Activated CD8-positive, alpha-beta memory T cell treated with anti-CD3 and anti-CD28 coated beads, Interleukin-2, amount 10 ng/mL, durations not matched to agents 7 days and 5 days (primary cell): ENCODE measurements at regions of chr6 and their contacts with region 1.

Region 1: GRCh38 chr6:27146706-27147505 is 100.6 kb upstream of the PRSS16 start:
- DNase-seq: peak; percentile 92
- ATAC-seq: peak; percentile 68
- H3K4me3 Mint-ChIP-seq: no peak overlapping the region
- H3K27ac Mint-ChIP-seq: no peak overlapping the region
- H3K4me1 Mint-ChIP-seq: peaks cover 25% of the 10 kb centered on the region
- H3K27me3 Mint-ChIP-seq: no peaks in the 10 kb centered on the region

Region 2: GRCh38 chr6:27132532-27133280 is 14.2 kb before region 1 on chr6:
- CTCF ChIA-PET with region 1: interaction called, 42 read pairs
- DNase-seq: peak; percentile 96
- ATAC-seq: peak; percentile 74
- H3K4me3 Mint-ChIP-seq: no peak overlapping the region
- H3K27ac Mint-ChIP-seq: no peak overlapping the region
- H3K4me1 Mint-ChIP-seq: peaks cover 49% of the 10 kb centered on the region
- H3K27me3 Mint-ChIP-seq: no peaks in the 10 kb centered on the region

Region 3: GRCh38 chr6:27388293-27389197 is 241.6 kb after region 1 on chr6 and contains the start of gene ZNF391:
- CTCF ChIA-PET with region 1: no interaction called
- DNase-seq: peak; percentile 77
- ATAC-seq: peak; percentile 94
- H3K4me3 Mint-ChIP-seq: peak within 1 kb of the TSS; percentile 97
- H3K27ac Mint-ChIP-seq: peak within 1 kb of the TSS; percentile 89
- H3K4me1 Mint-ChIP-seq: peaks cover 17% of the 10 kb centered on the region
- H3K27me3 Mint-ChIP-seq: peaks cover 12% of the 10 kb centered on the region
- total RNA-seq, gene ZNF391: 0.73 to 1.3 TPM

Region 4: DNA sequence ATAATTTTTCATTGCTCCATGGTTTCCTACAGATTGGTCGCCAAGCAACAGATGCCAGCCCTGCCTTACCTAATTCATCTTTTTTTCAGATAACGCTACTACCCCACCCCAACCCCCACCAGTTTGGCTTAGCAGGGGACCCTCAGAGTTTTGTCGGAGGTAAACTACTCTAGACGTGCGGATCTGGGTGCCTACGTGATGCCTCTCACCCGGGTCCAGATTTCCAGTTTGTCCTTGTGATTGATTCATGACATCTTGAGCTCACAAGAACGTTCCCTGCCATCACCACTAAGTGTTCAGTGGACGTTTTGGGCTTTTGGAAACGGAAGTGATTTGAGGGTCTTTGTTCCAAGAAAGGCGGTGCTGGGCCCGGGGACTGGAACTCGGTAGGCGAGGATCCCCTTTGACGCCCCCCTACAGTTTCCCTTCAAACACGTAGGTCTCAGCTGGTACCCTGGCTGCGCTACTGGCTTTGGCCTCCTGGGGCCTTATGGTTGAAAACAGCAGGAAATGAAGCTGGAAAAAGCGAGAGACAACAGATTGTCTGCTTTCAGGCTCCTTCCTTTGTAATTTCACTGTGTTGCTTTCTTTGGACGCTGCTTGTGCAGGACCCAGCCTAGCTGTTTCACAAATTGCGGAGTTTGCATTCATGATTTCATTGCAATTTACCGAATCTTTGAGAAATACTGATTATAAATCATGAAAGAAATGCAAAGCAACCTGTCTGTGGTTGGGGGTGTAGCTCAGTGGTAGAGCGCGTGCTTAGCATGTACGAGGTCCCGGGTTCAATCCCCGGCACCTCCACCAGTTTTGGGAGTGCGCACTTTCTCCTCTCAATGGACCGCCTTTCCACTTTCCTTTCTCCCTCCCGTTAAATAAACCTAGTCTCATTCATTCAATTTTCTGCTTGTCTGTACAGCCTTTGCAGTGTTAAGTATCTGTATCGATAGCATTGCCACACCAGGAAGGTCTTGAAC is 1459.8 kb after region 1 on chr6:
- CTCF ChIA-PET with region 1: no interaction called
- DNase-seq: peak; percentile 47
- ATAC-seq: no peak
- H3K4me3 Mint-ChIP-seq: peak overlapping the region; percentile 32
- H3K27ac Mint-ChIP-seq: no peak overlapping the region
- H3K4me1 Mint-ChIP-seq: peaks cover 5% of the 10 kb centered on the region
- H3K27me3 Mint-ChIP-seq: peaks cover 48% of the 10 kb centered on the region